K562 (cell line): ENCODE measurements at regions of chr1 and their contacts with region 1.

Region 1: DNA sequence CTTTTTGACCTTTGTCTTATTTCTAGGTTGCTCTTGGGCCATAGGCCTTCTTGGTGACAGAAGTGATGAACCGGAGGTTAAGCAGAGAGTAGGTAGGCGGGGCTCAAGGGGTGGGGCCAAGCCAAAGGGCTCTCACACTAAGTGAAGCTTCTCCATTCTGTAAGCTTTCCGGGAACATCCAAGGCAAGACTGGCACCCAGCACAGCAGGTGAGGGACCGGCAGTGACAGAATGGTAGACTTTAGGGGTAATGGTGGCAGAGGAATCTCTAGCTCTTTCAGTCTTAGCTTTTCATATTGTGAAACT is at the start of gene TNFAIP8L2:
- DNase-seq: peak in 3 of 4 experiments; percentile 41 to 56 (median 44)
- ATAC-seq: peak; percentile 86
- H3K4me3 ChIP-seq: no peak within 1 kb of the TSS
- H3K27ac ChIP-seq: peak within 1 kb of the TSS; percentile 10; the same call in 1 of the 3 replicates
- H3K4me1 ChIP-seq: peaks cover 8 to 14% of the 10 kb centered on the region in 2 experiments; a peak in 4 of 5 replicates
- H3K27me3 ChIP-seq: no peaks in the 10 kb centered on the region
- CTCF ChIP-seq: no peak
- EP300 ChIP-seq: no peak
- POLR2A ChIP-seq: no peak
- RAD21 ChIP-seq: no peak
- polyA plus RNA-seq, gene TNFAIP8L2: 1.1 to 1.2 TPM

Region 2: DNA sequence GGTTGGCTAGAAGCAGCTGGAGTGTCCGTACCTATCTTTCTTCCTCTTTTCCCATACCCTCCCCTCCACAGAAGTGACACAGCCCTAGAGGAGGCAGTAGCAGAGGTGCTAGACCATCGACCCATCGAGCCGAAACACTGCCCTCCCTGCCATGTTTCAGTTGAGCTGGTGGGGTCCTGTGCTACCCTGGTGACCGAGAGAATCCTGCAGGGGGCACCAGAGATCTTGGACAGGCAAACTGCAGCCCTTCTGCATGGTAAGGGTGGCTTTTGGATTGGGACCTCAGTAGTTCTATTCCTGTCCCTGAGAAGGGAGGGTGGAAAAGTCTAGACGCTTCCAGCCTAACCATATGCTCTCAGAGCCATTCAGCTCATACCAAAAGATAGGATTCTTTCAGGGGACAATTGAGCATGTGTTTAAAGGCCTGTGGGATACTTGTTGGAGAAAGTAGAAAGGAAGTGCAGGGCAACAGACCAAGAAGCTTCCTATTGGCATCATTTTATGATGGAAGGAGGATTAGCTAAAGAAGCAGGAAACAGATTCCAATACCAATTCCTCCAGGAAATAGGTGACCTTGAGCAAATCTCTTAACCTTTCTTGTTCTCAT is 131.8 kb before region 1 on chr1:
- CTCF ChIA-PET with region 1: interaction called, 23 read pairs
- POLR2A ChIA-PET with region 1: interaction called, 5 read pairs
- in situ Hi-C with region 1: loop called (anchors 5 kb)
- intact Hi-C with region 1: loop called (anchors 1 kb)
- DNase-seq: peak; percentile 55 to 88 (median 74)
- ATAC-seq: peak; percentile 99
- H3K4me3 ChIP-seq: no peak overlapping the region
- H3K27ac ChIP-seq: no peak overlapping the region; the same call in 2 of the 3 replicates
- H3K4me1 ChIP-seq: no peaks in the 10 kb centered on the region; a peak in 2 of 5 replicates
- H3K27me3 ChIP-seq: no peaks in the 10 kb centered on the region
- CTCF ChIP-seq: peak; percentile 90 to 92 (median 92)
- EP300 ChIP-seq: 0 out of 2 replicates have a peak, but pooled peaks have one; percentile 3
- POLR2A ChIP-seq: no peak
- RAD21 ChIP-seq: peak; percentile 81 to 88

Region 3: GRCh38 chr1:151085953-151086559 is 70.4 kb before region 1 on chr1:
- CTCF ChIA-PET with region 1: no interaction called
- POLR2A ChIA-PET with region 1: no interaction called
- in situ Hi-C with region 1: loop called (anchors 5 kb)
- intact Hi-C with region 1: no loop called
- DNase-seq: no peak
- ATAC-seq: no peak
- H3K4me3 ChIP-seq: no peak overlapping the region
- H3K27ac ChIP-seq: no peak overlapping the region
- H3K4me1 ChIP-seq: no peaks in the 10 kb centered on the region
- H3K27me3 ChIP-seq: no peaks in the 10 kb centered on the region
- CTCF ChIP-seq: no peak
- EP300 ChIP-seq: no peak
- POLR2A ChIP-seq: no peak
- RAD21 ChIP-seq: no peak

Region 4: GRCh38 chr1:151098126-151098525 is 58.3 kb before region 1 on chr1:
- CTCF ChIA-PET with region 1: interaction called, 51 read pairs
- POLR2A ChIA-PET with region 1: interaction called, 3 read pairs
- in situ Hi-C with region 1: loop called (anchors 5 kb)
- intact Hi-C with region 1: loop called (anchors 1 kb)
- DNase-seq: no peak
- ATAC-seq: no peak
- H3K4me3 ChIP-seq: no peak overlapping the region
- H3K27ac ChIP-seq: no peak overlapping the region
- H3K4me1 ChIP-seq: no peaks in the 10 kb centered on the region
- H3K27me3 ChIP-seq: no peaks in the 10 kb centered on the region
- CTCF ChIP-seq: no peak
- EP300 ChIP-seq: no peak
- POLR2A ChIP-seq: no peak
- RAD21 ChIP-seq: no peak

Region 5: GRCh38 chr1:151106894-151107293 is 49.6 kb before region 1 on chr1:
- CTCF ChIA-PET with region 1: interaction called, 51 read pairs
- POLR2A ChIA-PET with region 1: no interaction called
- in situ Hi-C with region 1: no loop called
- intact Hi-C with region 1: no loop called
- DNase-seq: no peak
- ATAC-seq: no peak
- H3K4me3 ChIP-seq: no peak overlapping the region
- H3K27ac ChIP-seq: no peak overlapping the region
- H3K4me1 ChIP-seq: no peaks in the 10 kb centered on the region
- H3K27me3 ChIP-seq: no peaks in the 10 kb centered on the region
- CTCF ChIP-seq: no peak
- EP300 ChIP-seq: no peak
- POLR2A ChIP-seq: no peak
- RAD21 ChIP-seq: no peak

Region 6: GRCh38 chr1:151574545-151575529 is 418.4 kb after region 1 on chr1:
- CTCF ChIA-PET with region 1: no interaction called
- POLR2A ChIA-PET with region 1: no interaction called
- in situ Hi-C with region 1: no loop called
- intact Hi-C with region 1: no loop called
- DNase-seq: peak; percentile 83 to 94 (median 86)
- ATAC-seq: peak; percentile 100
- H3K4me3 ChIP-seq: no peak overlapping the region
- H3K27ac ChIP-seq: peak overlapping the region; percentile 58
- H3K4me1 ChIP-seq: peaks cover 8 to 26% of the 10 kb centered on the region in 2 experiments; a peak in 4 of 5 replicates
- H3K27me3 ChIP-seq: no peaks in the 10 kb centered on the region
- CTCF ChIP-seq: no peak
- EP300 ChIP-seq: peak; percentile 63; the same call in 1 of the 2 replicates
- POLR2A ChIP-seq: peak; percentile 35; the same call in 1 of the 2 replicates
- RAD21 ChIP-seq: no peak